Endothelial cell of umbilical vein (primary cell): ENCODE measurements at regions of chr3 and their contacts with region 1.

Region 1: GRCh38 chr3:66407611-66408218 is 93.1 kb downstream of the LRIG1 start:
- DNase-seq: peak; percentile 72
- H3K4me3 ChIP-seq: no peak overlapping the region
- H3K27ac ChIP-seq: no peak overlapping the region
- H3K4me1 ChIP-seq: no peaks in the 10 kb centered on the region
- H3K27me3 ChIP-seq: no peaks in the 10 kb centered on the region
- CTCF ChIP-seq: peak; percentile 80 to 94
- POLR2A ChIP-seq: no peak

Region 2: GRCh38 chr3:66253790-66254620 is 153.7 kb before region 1 on chr3:
- CTCF ChIA-PET with region 1: interaction called, 10 read pairs
- POLR2A ChIA-PET with region 1: no interaction called
- dilution Hi-C with region 1: no loop called
- intact Hi-C with region 1: no loop called
- DNase-seq: peak; percentile 65
- H3K4me3 ChIP-seq: no peak overlapping the region
- H3K27ac ChIP-seq: no peak overlapping the region
- H3K4me1 ChIP-seq: peaks cover 6% of the 10 kb centered on the region
- H3K27me3 ChIP-seq: no peaks in the 10 kb centered on the region
- CTCF ChIP-seq: peak; percentile 28 to 41
- POLR2A ChIP-seq: no peak

Region 3: DNA sequence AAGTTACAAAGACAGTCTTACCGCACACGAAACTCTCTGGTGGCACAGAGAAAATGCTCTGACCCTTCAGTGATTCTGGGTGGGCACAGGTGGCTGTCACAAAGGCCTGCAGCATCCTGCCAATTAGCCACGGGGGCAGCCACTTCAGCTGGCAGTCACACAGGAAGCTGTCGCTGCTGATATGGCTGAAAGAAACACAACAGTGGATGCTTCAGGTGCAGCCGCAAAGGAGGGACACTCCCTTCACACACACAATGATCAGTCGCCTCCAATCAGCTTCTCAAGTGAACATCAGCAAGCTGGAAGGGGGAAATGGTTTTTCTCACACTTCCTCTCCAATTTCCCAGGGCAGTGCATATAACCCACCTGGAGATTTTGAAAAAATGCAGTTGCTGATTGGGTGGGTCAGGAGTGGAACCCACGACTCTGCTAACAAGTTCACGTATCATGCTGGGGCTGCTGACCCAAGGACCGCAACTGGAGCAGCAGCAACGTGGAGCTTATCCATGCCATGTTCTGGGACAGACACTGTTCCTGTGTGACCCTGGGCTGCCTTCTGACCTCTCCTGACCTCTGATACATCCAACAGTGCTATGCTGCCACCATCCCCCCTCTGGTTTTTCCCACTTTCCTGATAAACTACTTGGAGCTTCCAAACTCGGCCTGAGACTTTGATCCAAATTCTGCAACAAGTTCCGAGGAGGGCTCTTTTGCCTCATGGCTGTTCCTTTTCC is 13.5 kb before region 1 on chr3:
- CTCF ChIA-PET with region 1: interaction called, 20 read pairs
- POLR2A ChIA-PET with region 1: no interaction called
- dilution Hi-C with region 1: no loop called
- intact Hi-C with region 1: no loop called
- DNase-seq: peak; percentile 37
- H3K4me3 ChIP-seq: no peak overlapping the region
- H3K27ac ChIP-seq: peak overlapping the region; percentile 50
- H3K4me1 ChIP-seq: peaks cover 28% of the 10 kb centered on the region
- H3K27me3 ChIP-seq: no peaks in the 10 kb centered on the region
- CTCF ChIP-seq: no peak
- POLR2A ChIP-seq: no peak

Region 4: DNA sequence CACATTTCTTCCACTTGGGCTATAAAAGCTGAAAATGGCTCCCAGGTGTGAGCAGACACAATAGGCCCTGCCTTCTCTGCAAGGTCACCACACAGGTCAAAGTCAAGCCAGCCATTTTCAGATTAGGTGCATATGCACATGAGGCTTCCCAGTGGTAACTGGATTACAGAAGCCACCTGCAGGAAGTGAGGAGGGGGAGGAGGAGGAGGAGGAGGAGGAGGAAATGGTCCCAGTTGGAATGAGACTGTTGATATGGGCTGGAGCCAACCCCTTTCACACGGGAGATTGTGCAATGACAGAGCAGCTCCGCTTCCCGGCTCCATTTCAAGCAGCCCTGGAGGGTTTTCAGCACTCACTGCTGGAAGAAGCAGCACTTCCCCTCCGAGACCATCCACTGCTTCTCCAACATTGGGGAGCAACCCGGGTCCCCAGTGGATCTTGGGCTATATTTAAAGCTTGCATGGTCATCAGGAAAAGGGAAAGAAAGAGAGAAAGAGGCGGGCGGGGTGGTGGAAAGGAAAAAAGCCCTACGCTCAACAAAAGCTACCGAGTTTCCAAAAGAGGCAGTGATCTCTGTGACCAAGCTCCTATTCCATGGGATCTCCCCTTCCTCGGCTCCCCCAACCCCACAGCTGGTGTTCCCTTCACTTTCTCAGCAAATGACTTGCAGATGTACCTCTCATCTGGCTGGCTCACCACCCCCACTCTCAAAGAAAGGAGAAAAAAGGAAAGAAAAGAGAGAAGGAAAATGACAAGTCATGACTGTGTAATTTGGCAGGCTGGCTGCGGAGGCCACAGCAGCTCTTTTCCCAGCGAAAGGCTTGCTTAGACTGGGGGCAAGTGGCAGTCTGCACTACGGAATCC is 34.8 kb after region 1 on chr3:
- CTCF ChIA-PET with region 1: interaction called, 7 read pairs
- POLR2A ChIA-PET with region 1: interaction called, 6 read pairs
- dilution Hi-C with region 1: no loop called
- intact Hi-C with region 1: loop called (anchors 5 kb)
- DNase-seq: peak; percentile 92
- H3K4me3 ChIP-seq: no peak overlapping the region
- H3K27ac ChIP-seq: peak overlapping the region; percentile 79
- H3K4me1 ChIP-seq: peaks cover 34% of the 10 kb centered on the region
- H3K27me3 ChIP-seq: no peaks in the 10 kb centered on the region
- CTCF ChIP-seq: no peak
- POLR2A ChIP-seq: no peak

Region 5: DNA sequence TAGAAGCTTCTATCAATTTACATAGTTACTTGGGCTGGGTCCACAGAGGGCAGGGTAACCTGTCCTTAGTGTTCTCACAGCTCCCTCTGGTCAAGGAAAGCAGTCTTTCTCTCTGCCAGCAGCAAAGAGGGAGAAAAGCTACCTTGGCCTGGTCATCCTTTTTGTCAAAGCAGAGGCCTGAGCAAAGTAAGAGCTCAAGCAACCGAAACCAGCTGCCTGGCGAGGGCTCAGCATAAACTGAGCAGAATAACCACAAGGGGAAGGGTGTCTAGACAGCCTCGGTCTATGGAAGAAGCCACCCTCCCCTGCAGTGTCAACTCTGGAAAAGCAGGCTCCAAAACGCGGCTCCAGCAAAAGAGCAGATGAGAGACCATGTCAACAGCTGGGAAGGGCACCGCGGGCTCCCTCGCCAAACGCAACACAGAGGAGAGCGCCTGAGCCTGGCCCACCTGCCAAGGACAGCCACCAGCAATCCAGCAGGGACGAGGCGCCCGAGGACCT is 75.7 kb after region 1 on chr3:
- CTCF ChIA-PET with region 1: interaction called, 11 read pairs
- POLR2A ChIA-PET with region 1: no interaction called
- dilution Hi-C with region 1: no loop called
- intact Hi-C with region 1: no loop called
- DNase-seq: no peak
- H3K4me3 ChIP-seq: no peak overlapping the region
- H3K27ac ChIP-seq: peak overlapping the region; percentile 28
- H3K4me1 ChIP-seq: peaks cover 38% of the 10 kb centered on the region
- H3K27me3 ChIP-seq: no peaks in the 10 kb centered on the region
- CTCF ChIP-seq: no peak
- POLR2A ChIP-seq: no peak

Region 6: GRCh38 chr3:66625505-66626216 is 217.9 kb after region 1 on chr3:
- CTCF ChIA-PET with region 1: no interaction called
- POLR2A ChIA-PET with region 1: no interaction called
- dilution Hi-C with region 1: no loop called
- intact Hi-C with region 1: loop called (anchors 5 kb)
- DNase-seq: no peak
- H3K4me3 ChIP-seq: no peak overlapping the region
- H3K27ac ChIP-seq: no peak overlapping the region
- H3K4me1 ChIP-seq: no peaks in the 10 kb centered on the region
- H3K27me3 ChIP-seq: no peaks in the 10 kb centered on the region
- CTCF ChIP-seq: no peak
- POLR2A ChIP-seq: no peak